ENCODE measurements at regions of chr5 and their contacts with region 1.

Region 1: GRCh38 chr5:10498350-10498749 is 56.7 kb downstream of the ROPN1L start:
- DNase-seq: no peak
- H3K4me3 ChIP-seq: no peak overlapping the region
- H3K27ac ChIP-seq: no peak overlapping the region
- H3K4me1 ChIP-seq: no peaks in the 10 kb centered on the region
- H3K27me3 ChIP-seq: no peaks in the 10 kb centered on the region
- CTCF ChIP-seq: no peak
- POLR2A ChIP-seq: no peak

Region 2: DNA sequence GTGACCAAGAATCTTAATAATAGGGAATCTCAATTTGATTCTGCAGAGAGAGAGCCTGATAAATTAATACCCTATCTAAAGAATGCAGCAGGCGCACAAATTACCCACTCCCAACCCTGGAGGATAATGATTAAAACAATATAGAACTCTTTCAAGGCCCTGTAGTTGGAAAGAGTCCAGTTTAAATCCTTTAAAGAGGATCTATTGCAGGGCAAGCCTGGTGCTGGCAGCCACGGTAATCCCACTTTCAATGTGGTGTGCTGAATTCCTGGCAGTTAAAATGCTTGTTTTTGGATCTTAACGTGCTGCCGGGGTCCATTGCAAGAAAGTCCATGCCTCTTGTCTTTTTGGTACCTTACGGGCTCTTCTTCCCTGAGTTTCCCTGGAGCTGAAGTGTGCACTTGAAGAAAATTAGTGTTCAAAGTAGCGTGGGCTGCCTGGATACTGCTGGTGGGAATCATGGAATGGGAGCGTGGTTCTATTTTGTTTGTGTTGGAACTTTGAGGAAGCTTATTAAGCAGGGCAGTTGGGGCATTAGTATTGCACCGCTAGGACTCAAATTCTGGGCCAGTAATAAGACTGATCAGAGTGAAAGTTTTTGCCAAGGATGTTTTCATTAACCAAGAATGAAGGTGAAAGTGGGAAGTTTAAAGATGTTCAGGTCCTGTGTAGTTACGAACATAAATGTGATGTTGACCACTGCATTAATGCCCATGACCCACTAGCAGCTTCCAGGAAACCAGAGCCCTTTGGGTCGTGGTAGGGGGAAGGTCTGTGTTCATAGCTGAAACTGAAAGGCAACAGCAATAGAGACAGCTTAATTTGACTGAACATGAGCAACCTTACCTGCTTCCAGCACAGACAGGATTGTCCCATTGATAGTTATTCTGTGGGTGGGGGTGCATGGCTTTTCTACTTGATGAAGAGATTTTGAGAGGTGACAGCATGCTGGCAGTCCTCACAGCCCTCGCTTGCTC is 124.0 kb before region 1 on chr5:
- intact Hi-C with region 1: loop called (anchors 5 kb)
- DNase-seq: peak in 1 of 2 donors; percentile 19
- H3K4me3 ChIP-seq: no peak overlapping the region
- H3K27ac ChIP-seq: no peak overlapping the region
- H3K4me1 ChIP-seq: peaks cover 22 to 38% of the 10 kb centered on the region in 2 donors
- H3K27me3 ChIP-seq: no peaks in the 10 kb centered on the region
- CTCF ChIP-seq: no peak
- POLR2A ChIP-seq: no peak